ENCODE measurements at regions of chr5 and their contacts with region 1.

Region 1: GRCh38 chr5:32174011-32174870 is at the start of gene GOLPH3:
- DNase-seq: peak; percentile 95 to 97
- ATAC-seq: peak; percentile 92 to 96 (median 94)
- H3K4me3 ChIP-seq: peak within 1 kb of the TSS; percentile 100
- H3K27ac ChIP-seq: peak within 1 kb of the TSS; percentile 100
- H3K4me1 ChIP-seq: peaks cover 37% of the 10 kb centered on the region
- H3K27me3 ChIP-seq: no peaks in the 10 kb centered on the region
- CTCF ChIP-seq: no peak
- total RNA-seq, gene GOLPH3: 23.0 to 55.3 (median 35.0) TPM

Region 2: GRCh38 chr5:32223946-32224608 is 49.8 kb after region 1 on chr5:
- intact Hi-C with region 1: loop called in 1 of 2 experiments (anchors 10 kb)
- DNase-seq: no peak
- ATAC-seq: peak; percentile 66 to 83 (median 74)
- H3K4me3 ChIP-seq: no peak overlapping the region
- H3K27ac ChIP-seq: peak overlapping the region; percentile 11
- H3K4me1 ChIP-seq: peaks cover 8% of the 10 kb centered on the region
- H3K27me3 ChIP-seq: no peaks in the 10 kb centered on the region
- CTCF ChIP-seq: no peak

Measured in psoas muscle (tissue), 8 donors.